ENCODE measurements at regions of chr9 and their contacts with region 1.

Region 1: GRCh38 chr9:73081979-73082657 is 69.5 kb upstream of the ANXA1 start:
- DNase-seq: no peak
- ATAC-seq: peak in 1 of 4 donors; percentile 60
- H3K4me3 ChIP-seq: no peak overlapping the region
- H3K27ac ChIP-seq: peak overlapping the region in 1 of 12 donors; percentile 27
- H3K4me1 ChIP-seq: peaks cover 0 to 4% (median 0%) of the 10 kb centered on the region in 12 donors
- H3K27me3 ChIP-seq: peaks cover 0 to 6% (median 0%) of the 10 kb centered on the region in 9 donors
- CTCF ChIP-seq: peak; percentile 54 to 85 (median 76)
- POLR2A ChIP-seq: no peak

Region 2: GRCh38 chr9:72280913-72281500 is 801.1 kb before region 1 on chr9:
- intact Hi-C with region 1: loop called in 3 of 10 experiments (anchors 5 to 10 kb)
- DNase-seq: peak; percentile 60 to 80 (median 66)
- ATAC-seq: peak; percentile 86 to 90 (median 88)
- H3K4me3 ChIP-seq: no peak overlapping the region
- H3K27ac ChIP-seq: no peak overlapping the region
- H3K4me1 ChIP-seq: no peaks in the 10 kb centered on the region
- H3K27me3 ChIP-seq: no peaks in the 10 kb centered on the region
- CTCF ChIP-seq: peak; percentile 85 to 98 (median 90)
- POLR2A ChIP-seq: no peak

Region 3: DNA sequence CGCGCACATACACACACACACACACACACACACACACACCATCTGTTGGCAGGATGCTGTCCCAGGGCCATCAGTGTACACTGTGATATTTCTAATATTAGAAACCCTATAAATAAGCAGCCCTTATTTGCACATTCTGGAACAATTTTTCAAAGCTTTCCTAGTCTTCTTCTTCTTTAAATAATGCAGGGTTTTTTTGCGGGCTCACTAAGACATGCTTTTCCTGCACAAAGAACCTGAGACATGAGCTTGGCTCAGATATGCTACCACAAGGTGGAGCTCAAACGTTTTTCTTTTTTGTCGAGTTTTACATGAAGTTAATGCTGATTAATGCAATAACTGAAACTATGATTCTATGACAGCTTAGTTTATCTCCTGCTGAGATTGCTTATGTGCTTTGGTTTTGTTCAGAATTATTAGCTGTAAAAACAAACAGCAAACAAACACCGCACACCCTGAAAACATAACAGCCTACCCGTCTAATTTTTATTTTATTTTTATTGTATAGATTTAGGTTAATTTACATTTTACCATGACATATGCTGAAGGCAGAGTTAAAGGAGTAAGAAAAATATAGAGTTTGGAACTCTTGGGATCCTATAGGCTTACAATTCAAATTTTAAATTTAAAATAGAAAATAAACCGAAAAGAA is 225.0 kb before region 1 on chr9:
- intact Hi-C with region 1: loop called (anchors 2 to 5 kb)
- DNase-seq: peak in 2 of 5 donors; percentile 18 to 23
- ATAC-seq: peak; percentile 55 to 83 (median 70)
- H3K4me3 ChIP-seq: no peak overlapping the region
- H3K27ac ChIP-seq: peak overlapping the region in 2 of 12 donors; percentile 32 to 46
- H3K4me1 ChIP-seq: peaks cover 0 to 30% (median 14%) of the 10 kb centered on the region in 12 donors
- H3K27me3 ChIP-seq: no peaks in the 10 kb centered on the region
- CTCF ChIP-seq: peak; percentile 44 to 81 (median 63)
- POLR2A ChIP-seq: no peak

Region 4: GRCh38 chr9:72871685-72872084 is 210.4 kb before region 1 on chr9:
- intact Hi-C with region 1: loop called in 8 of 10 experiments (anchors 2 to 5 kb)
- DNase-seq: no peak
- ATAC-seq: no peak
- H3K4me3 ChIP-seq: peak overlapping the region in 5 of 12 donors; percentile 4 to 34 (median 25)
- H3K27ac ChIP-seq: no peak overlapping the region
- H3K4me1 ChIP-seq: peaks cover 0 to 20% (median 3%) of the 10 kb centered on the region in 12 donors
- H3K27me3 ChIP-seq: no peaks in the 10 kb centered on the region
- CTCF ChIP-seq: peak; percentile 14 to 61 (median 48)
- POLR2A ChIP-seq: no peak

Region 5: DNA sequence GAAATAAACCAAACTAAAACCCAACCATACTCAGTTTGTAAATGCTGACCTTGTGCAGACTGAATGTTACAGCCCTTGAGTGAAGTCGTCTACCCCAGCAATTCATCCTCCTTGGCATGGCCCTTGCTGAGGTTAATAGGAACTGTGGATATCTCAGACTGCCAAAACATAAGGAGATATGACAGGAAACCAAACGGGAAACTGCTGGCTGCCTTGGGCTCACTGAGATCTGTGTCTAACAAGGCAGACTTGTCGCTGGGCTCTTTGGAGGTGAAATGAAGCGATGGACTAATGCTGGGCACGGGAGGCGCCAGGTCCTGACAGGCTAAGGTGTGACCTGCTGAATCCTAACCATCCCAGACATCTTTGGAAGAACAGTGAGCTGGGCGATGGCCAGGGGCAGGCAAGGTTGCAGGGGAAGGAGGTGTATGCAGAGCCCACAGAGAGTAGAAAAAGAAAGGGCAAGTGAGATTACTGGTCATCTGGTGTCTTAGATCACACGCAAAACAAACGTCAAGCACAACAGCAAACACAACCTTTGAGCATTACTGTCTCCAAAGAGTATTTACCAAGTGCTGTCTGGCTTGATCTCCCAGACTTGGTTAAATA is 84.6 kb before region 1 on chr9:
- intact Hi-C with region 1: no loop called
- DNase-seq: peak in 1 of 5 donors; percentile 55
- ATAC-seq: peak in 1 of 4 donors; percentile 51
- H3K4me3 ChIP-seq: peak overlapping the region in 1 of 12 donors; percentile 20
- H3K27ac ChIP-seq: no peak overlapping the region
- H3K4me1 ChIP-seq: peaks cover 0 to 8% (median 0%) of the 10 kb centered on the region in 12 donors
- H3K27me3 ChIP-seq: no peaks in the 10 kb centered on the region
- CTCF ChIP-seq: no peak
- POLR2A ChIP-seq: no peak

Region 6: DNA sequence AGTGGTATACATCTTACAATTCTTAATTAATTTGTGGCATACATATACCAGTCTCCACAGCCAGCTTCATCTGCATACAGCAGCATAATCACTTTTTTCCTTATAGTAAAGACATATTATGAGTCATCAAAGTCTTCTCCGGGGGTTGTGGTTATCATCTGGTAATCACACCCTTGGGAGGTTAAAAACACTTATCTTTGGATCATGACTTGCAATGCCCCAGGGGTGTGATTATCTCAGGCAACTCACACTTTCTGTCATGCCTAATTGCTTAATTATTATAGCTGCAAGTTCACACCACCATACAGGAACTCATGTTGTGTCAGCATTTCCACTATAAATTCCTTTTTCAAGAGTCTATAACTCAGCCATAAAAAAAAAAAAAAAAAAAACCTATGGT is 287.9 kb after region 1 on chr9:
- intact Hi-C with region 1: no loop called
- DNase-seq: no peak
- ATAC-seq: no peak
- H3K4me3 ChIP-seq: no peak overlapping the region
- H3K27ac ChIP-seq: no peak overlapping the region
- H3K4me1 ChIP-seq: no peaks in the 10 kb centered on the region
- H3K27me3 ChIP-seq: no peaks in the 10 kb centered on the region
- CTCF ChIP-seq: no peak
- POLR2A ChIP-seq: no peak

Measured in heart left ventricle (tissue), 16 donors.